WTC11 (cell line): ENCODE measurements at regions of chr4 and their contacts with region 1.

Region 1: GRCh38 chr4:81351654-81352445 is 119.9 kb downstream of the RASGEF1B start:
- DNase-seq: peak; percentile 85
- ATAC-seq: peak; percentile 94
- H3K4me3 Mint-ChIP-seq: no peak overlapping the region
- H3K27ac Mint-ChIP-seq: no peak overlapping the region
- H3K4me1 Mint-ChIP-seq: peaks cover 6% of the 10 kb centered on the region
- H3K27me3 Mint-ChIP-seq: no peaks in the 10 kb centered on the region
- CTCF ChIP-seq: peak; percentile 82

Region 2: GRCh38 chr4:81214881-81215868 is 136.7 kb before region 1 on chr4 and contains the start of gene PRKG2:
- CTCF ChIA-PET with region 1: interaction called, 12 read pairs
- POLR2A ChIA-PET with region 1: no interaction called
- DNase-seq: peak; percentile 40
- ATAC-seq: peak; percentile 68
- H3K4me3 Mint-ChIP-seq: peak within 1 kb of the TSS; percentile 77
- H3K27ac Mint-ChIP-seq: no peak within 1 kb of the TSS
- H3K4me1 Mint-ChIP-seq: peaks cover 15% of the 10 kb centered on the region
- H3K27me3 Mint-ChIP-seq: peaks cover 53% of the 10 kb centered on the region
- CTCF ChIP-seq: no peak
- total RNA-seq, gene PRKG2: 1.9 to 3.6 TPM (median 2.7 TPM) in 3 replicates

Region 3: GRCh38 chr4:81319657-81320056 is 32.2 kb before region 1 on chr4:
- CTCF ChIA-PET with region 1: interaction called, 10 read pairs
- POLR2A ChIA-PET with region 1: no interaction called
- DNase-seq: no peak
- ATAC-seq: no peak
- H3K4me3 Mint-ChIP-seq: no peak overlapping the region
- H3K27ac Mint-ChIP-seq: no peak overlapping the region
- H3K4me1 Mint-ChIP-seq: no peaks in the 10 kb centered on the region
- H3K27me3 Mint-ChIP-seq: no peaks in the 10 kb centered on the region; the same call in 1 of the 2 replicates
- CTCF ChIP-seq: no peak

Region 4: DNA sequence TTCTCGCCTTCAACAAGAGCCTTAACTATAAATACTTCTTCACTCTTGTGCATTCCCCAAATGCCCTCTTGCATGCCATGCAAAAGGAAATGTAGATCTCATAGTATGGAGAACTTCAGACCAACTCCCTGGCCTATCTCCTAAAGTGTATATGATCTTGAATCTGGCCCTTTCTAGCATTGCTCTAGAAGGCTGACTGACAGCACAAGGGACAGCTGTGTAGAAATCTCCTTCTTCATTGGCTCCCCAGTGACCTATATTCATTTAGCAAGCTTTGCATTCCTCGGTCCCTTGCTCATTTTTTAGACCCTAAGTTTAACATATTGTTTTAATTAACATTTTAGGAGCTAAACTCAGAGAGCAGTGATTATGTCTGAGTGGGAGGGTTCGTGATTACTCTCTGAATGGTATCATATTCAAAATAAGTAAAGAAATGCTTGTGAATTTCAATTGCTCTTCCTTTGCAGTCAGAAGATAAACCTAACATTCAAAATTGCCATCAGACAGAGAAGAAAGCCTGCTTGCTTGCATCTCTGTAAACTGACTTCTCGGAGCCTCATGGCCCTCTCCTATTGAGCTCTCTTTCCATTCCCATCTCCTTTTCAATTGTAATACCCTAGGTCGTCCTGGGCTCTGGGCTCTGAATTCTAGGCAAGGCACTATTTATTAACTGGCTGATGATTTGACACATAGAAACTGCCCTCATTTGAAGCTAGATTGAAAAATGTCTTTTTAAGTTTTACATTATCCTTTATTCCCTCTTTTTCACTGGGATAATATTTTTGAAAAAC is 16.5 kb before region 1 on chr4:
- CTCF ChIA-PET with region 1: interaction called, 10 read pairs
- POLR2A ChIA-PET with region 1: no interaction called
- DNase-seq: no peak
- ATAC-seq: peak; percentile 56
- H3K4me3 Mint-ChIP-seq: no peak overlapping the region
- H3K27ac Mint-ChIP-seq: no peak overlapping the region
- H3K4me1 Mint-ChIP-seq: peaks cover 6% of the 10 kb centered on the region
- H3K27me3 Mint-ChIP-seq: no peaks in the 10 kb centered on the region
- CTCF ChIP-seq: no peak